Psoas muscle (tissue), 8 donors: ENCODE measurements at regions of chr1 and their contacts with region 1.

Region 1: GRCh38 chr1:168609133-168609715 is 32.8 kb downstream of the XCL1 start:
- DNase-seq: peak; percentile 76 to 88
- ATAC-seq: peak; percentile 81 to 82 (median 82)
- H3K4me3 ChIP-seq: peak overlapping the region; percentile 53
- H3K27ac ChIP-seq: peak overlapping the region; percentile 94
- H3K4me1 ChIP-seq: peaks cover 74% of the 10 kb centered on the region
- H3K27me3 ChIP-seq: no peaks in the 10 kb centered on the region
- CTCF ChIP-seq: no peak

Region 2: DNA sequence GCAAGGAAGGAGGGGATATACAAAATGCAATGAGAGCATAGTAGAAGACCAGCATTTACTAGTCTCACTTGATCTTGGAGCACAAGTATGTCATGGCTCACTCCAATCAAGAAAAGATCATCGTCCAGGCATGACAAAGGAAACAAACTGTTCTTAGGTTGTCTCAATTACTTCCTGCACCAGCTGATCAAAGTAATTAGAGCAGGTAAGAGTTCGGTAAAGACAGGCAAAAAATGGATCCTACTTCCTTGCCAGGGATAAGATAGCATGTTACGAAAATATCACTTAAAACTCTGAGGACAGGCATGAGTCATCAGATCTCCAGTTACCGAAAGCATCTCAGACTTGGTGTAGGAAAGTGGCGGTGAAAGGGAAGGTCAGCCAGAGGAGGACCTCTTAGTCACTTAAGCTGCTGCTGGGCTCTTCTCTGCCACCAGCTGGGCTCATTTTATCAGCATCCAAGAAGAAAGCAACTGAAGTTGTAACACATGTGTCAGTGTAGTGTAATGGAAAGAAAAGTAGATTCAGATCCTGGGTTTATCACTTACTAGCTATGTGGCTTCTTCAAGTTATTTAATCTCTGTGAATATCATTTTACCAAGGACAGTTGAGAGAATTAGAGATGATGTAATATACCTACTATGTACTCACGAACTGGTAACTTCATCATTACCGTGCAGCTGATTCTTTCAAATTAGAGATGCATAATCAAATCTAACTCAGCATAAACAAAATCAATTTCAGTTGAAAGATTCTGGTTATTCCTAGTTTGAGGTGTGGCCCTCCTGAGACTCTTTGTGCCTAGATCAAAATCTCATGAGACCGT is 14.0 kb after region 1 on chr1:
- intact Hi-C with region 1: loop called in 1 of 2 experiments (anchors 2 kb)
- DNase-seq: peak; percentile 56 to 78
- ATAC-seq: peak; percentile 89 to 92 (median 90)
- H3K4me3 ChIP-seq: peak overlapping the region; percentile 41
- H3K27ac ChIP-seq: peak overlapping the region; percentile 94
- H3K4me1 ChIP-seq: peaks cover 51% of the 10 kb centered on the region
- H3K27me3 ChIP-seq: no peaks in the 10 kb centered on the region
- CTCF ChIP-seq: peak; percentile 20